T-cell (primary cell): ENCODE measurements at regions of chr17 and their contacts with region 1.

Region 1: DNA sequence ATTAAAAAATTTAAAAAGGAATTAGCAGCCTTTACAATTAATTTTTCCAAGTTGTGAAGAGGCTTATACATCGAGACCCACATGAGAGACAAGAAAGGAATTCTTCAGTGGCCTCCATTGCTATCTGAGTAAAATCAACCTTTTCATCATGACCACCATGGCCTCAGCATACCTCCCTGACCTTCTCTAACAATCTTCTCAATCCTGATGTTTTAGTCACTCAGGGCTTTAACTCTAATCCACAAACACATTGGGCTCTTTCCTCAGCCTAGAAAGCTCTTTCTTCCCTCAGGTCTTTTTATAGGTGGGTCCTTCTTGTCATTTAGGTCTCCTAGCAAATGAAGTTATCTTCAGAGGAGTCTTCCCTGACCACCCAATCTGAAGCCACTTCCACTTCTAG is 46.4 kb downstream of the SPOP start:
- DNase-seq: no peak
- ATAC-seq: no peak
- H3K4me3 ChIP-seq: no peak overlapping the region
- H3K4me3 Mint-ChIP-seq: no peak overlapping the region
- H3K27ac ChIP-seq: no peak overlapping the region
- H3K27ac Mint-ChIP-seq: peak overlapping the region in 1 of 2 donors; percentile 65
- H3K4me1 ChIP-seq: peaks cover 0 to 2% of the 10 kb centered on the region in 2 experiments
- H3K4me1 Mint-ChIP-seq: peaks cover 59 to 66% (median 64%) of the 10 kb centered on the region in 3 donors
- H3K27me3 ChIP-seq: no peaks in the 10 kb centered on the region
- H3K27me3 Mint-ChIP-seq: no peaks in the 10 kb centered on the region

Region 2: DNA sequence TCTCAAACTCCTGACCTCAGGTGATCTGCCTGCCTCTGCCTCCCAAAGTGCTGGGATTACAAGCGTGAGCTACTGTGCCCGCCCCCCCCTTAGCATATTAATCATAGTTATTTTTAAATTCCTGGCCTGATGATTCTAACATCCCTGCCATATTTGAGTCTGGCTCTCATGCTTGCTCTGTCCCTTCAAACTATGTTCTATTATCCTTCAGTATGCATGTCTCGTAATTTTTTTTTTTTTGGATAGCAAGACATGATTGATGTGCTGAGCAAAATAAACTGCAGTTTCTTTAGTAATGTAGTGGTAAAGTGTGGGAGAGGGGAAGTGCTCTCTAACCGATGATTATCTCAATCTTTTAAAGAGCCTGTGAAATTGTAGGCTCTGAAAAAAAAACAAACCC is 608.4 kb after region 1 on chr17:
- CTCF ChIA-PET with region 1: interaction called in 1 of 2 experiments, 11 read pairs
- POLR2A ChIA-PET with region 1: no interaction called
- DNase-seq: no peak
- ATAC-seq: no peak
- H3K4me3 ChIP-seq: no peak overlapping the region
- H3K4me3 Mint-ChIP-seq: no peak overlapping the region
- H3K27ac ChIP-seq: no peak overlapping the region
- H3K27ac Mint-ChIP-seq: no peak overlapping the region
- H3K4me1 ChIP-seq: peaks cover 0 to 11% of the 10 kb centered on the region in 2 experiments
- H3K4me1 Mint-ChIP-seq: peaks cover 0 to 3% (median 0%) of the 10 kb centered on the region in 3 donors
- H3K27me3 ChIP-seq: peaks cover 0 to 15% of the 10 kb centered on the region in 2 experiments
- H3K27me3 Mint-ChIP-seq: peaks cover 41 to 46% of the 10 kb centered on the region in 2 donors